Activated T-helper 2 cell treated with anti-CD3 and anti-CD28 coated beads, Interferon-gamma antibody, Interleukin-2, Interleukin-4, amounts not matched to agents 10 μg/mL and 5 μg/mL and 100 μg/mL, durations not matched to agents 14 hours and 24 hours and 36 hours (primary cell): ENCODE measurements at regions of chr3 and their contacts with region 1.

Region 1: GRCh38 chr3:173584093-173584837 is 186.7 kb downstream of the NLGN1 start:
- DNase-seq: no peak
- H3K4me3 Mint-ChIP-seq: no peak overlapping the region
- H3K27ac Mint-ChIP-seq: no peak overlapping the region
- H3K4me1 Mint-ChIP-seq: peaks cover 6% of the 10 kb centered on the region
- H3K27me3 Mint-ChIP-seq: peaks cover 26% of the 10 kb centered on the region

Region 2: GRCh38 chr3:173395412-173396181 is 188.7 kb before region 1 on chr3:
- intact Hi-C with region 1: loop called (anchors 2 kb)
- DNase-seq: peak; percentile 64
- H3K4me3 Mint-ChIP-seq: peak overlapping the region; percentile 76
- H3K27ac Mint-ChIP-seq: no peak overlapping the region
- H3K4me1 Mint-ChIP-seq: peaks cover 27% of the 10 kb centered on the region
- H3K27me3 Mint-ChIP-seq: peaks cover 62% of the 10 kb centered on the region

Region 3: DNA sequence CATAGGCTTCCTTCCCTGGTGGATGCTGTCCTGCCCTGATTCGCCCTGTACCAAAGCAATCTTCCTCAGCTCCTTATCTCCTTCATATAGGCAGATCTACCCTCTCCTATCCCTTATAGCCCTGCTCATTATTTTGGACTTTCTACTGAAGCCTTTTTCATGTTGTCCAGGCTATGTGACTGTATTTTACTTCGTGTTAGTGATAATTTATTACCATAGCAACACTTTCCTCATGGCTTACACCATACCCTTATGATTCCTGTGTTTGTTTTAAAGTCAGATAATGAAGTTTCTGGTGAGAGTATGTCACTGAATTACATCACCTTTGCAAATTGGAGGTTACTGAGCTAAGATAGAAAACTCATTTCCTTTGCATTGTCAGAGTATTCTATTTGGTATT is 165.8 kb after region 1 on chr3:
- intact Hi-C with region 1: no loop called
- DNase-seq: no peak
- H3K4me3 Mint-ChIP-seq: no peak overlapping the region
- H3K27ac Mint-ChIP-seq: no peak overlapping the region
- H3K4me1 Mint-ChIP-seq: no peaks in the 10 kb centered on the region
- H3K27me3 Mint-ChIP-seq: no peaks in the 10 kb centered on the region

Region 4: DNA sequence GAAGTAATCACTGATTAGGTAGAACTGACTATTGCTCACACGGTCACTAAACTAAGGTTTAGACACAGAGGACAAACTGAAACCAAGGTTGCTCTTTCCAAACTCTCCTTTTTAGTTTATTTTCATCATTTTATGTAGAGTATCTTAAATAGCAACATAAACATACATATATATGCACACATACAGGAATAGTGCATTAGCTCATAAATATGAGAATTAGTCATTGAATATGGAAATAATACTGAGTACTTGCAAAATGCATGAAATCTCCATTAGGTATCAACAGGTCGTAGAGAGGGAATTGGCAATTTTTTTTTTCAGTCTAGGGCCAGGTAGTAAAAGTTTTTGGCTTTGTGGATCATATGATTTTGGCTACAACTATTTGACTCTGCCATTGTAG is 370.4 kb after region 1 on chr3:
- intact Hi-C with region 1: no loop called
- DNase-seq: no peak
- H3K4me3 Mint-ChIP-seq: no peak overlapping the region
- H3K27ac Mint-ChIP-seq: no peak overlapping the region
- H3K4me1 Mint-ChIP-seq: no peaks in the 10 kb centered on the region
- H3K27me3 Mint-ChIP-seq: no peaks in the 10 kb centered on the region